Natural killer cell (primary cell): ENCODE measurements at regions of chr3 and their contacts with region 1.

Region 1: DNA sequence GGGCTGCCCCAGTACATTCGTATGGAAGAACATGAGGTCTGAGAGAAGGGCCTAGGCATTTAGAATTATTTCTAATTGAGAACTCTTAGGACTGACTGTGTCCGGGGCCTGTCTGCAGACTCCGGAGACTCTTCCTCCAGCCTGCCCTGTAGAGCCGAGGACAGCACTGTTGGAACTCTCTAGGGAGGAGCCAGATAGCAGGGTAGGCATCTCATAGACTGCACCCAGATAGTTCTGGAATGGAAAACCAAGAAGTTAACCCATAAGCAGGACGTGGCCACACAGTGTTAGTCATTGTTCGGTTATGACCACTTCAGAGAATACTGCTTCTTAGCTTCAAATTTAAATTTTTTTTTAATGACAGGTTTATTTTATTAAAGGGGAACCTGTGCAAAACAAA is 59.5 kb downstream of the SNRK start:
- DNase-seq: no peak
- ATAC-seq: peak in 2 of 3 donors; percentile 31 to 34
- H3K4me3 ChIP-seq: no peak overlapping the region
- H3K4me3 Mint-ChIP-seq: peak overlapping the region; percentile 79
- H3K27ac ChIP-seq: peak overlapping the region; percentile 85
- H3K27ac Mint-ChIP-seq: peak overlapping the region; percentile 97 to 98
- H3K4me1 ChIP-seq: peaks cover 61% of the 10 kb centered on the region
- H3K4me1 Mint-ChIP-seq: peaks cover 79 to 83% of the 10 kb centered on the region in 2 donors
- H3K27me3 ChIP-seq: no peaks in the 10 kb centered on the region
- H3K27me3 Mint-ChIP-seq: no peaks in the 10 kb centered on the region
- CTCF ChIP-seq: no peak

Region 2: DNA sequence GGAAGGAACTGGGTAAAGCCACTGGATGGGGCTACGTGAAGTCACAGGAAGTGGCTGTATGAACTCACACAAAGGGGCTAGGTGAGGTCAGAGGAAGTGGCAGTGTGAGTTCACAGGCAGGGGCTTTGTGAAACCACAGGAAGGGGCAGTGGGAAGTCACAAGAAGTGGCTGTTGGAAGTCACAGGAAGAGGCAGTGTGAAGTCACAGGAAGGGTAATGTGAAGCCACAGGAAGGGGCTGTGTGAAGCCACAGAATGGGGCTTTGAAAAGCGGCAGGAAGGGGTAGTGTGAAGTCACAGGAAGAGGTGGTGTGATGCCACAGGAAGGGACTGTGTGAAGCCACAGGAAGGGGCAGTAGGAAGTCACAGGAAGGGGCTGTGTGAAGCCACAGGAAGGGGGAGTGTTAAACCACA is 332.1 kb before region 1 on chr3:
- intact Hi-C with region 1: loop called (anchors 1 kb)
- DNase-seq: peak; percentile 52 to 66
- ATAC-seq: peak in 2 of 3 donors; percentile 6 to 12
- H3K4me3 ChIP-seq: no peak overlapping the region
- H3K4me3 Mint-ChIP-seq: no peak overlapping the region
- H3K27ac ChIP-seq: peak overlapping the region; percentile 97
- H3K27ac Mint-ChIP-seq: no peak overlapping the region
- H3K4me1 ChIP-seq: peaks cover 37% of the 10 kb centered on the region
- H3K4me1 Mint-ChIP-seq: no peaks in the 10 kb centered on the region
- H3K27me3 ChIP-seq: no peaks in the 10 kb centered on the region
- H3K27me3 Mint-ChIP-seq: no peaks in the 10 kb centered on the region
- CTCF ChIP-seq: no peak

Region 3: GRCh38 chr3:43296565-43296964 is 49.3 kb before region 1 on chr3:
- intact Hi-C with region 1: loop called (anchors 2 kb)
- DNase-seq: peak; percentile 43 to 89
- ATAC-seq: peak; percentile 87 to 96 (median 91)
- H3K4me3 ChIP-seq: peak overlapping the region; percentile 14
- H3K4me3 Mint-ChIP-seq: peak overlapping the region; percentile 87
- H3K27ac ChIP-seq: peak overlapping the region; percentile 71
- H3K27ac Mint-ChIP-seq: peak overlapping the region; percentile 82 to 97
- H3K4me1 ChIP-seq: peaks cover 46% of the 10 kb centered on the region
- H3K4me1 Mint-ChIP-seq: peaks cover 71 to 81% of the 10 kb centered on the region in 2 donors
- H3K27me3 ChIP-seq: no peaks in the 10 kb centered on the region
- H3K27me3 Mint-ChIP-seq: no peaks in the 10 kb centered on the region
- CTCF ChIP-seq: no peak

Region 4: DNA sequence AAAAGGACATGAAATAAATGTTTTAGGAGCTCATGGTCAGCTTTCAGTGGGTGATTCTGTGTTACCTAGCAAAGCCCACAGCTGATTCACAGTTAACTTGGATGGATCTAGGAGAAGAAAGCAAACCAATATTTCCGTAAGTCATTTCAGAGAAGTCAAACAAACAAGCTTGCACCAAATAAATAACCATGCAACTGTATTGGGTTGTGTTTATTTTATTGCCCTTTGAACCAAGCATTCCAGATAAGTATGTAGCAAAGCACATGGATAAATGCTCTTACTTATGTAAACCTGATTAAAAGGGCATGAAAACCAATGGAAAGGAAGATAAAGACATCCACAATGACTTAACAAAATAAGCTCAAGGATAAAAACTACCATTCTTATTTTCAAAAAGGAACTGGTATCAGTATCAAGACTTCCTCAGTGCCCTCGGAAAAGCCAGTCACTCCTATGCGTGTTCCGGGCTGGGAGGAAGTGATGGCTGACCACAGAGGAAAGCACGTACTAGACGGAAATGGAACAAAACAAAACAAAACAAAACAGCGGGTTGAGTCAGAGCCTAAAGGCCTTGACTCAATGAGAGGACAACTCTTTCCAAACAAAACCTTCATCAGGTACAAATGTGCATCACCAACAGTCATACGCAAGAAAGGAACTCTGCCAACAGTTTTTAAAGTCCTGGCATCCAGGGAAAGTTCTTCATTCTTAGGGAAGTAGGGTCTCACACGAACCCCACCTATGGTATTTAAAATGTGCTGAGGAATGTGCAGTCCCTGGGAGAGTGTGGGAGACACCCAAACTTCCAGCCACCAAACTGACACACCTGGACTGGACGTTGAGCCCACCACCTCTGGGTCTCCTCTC is 43.7 kb after region 1 on chr3:
- intact Hi-C with region 1: loop called (anchors 2 kb)
- DNase-seq: peak; percentile 45 to 90
- ATAC-seq: peak; percentile 83 to 91 (median 90)
- H3K4me3 ChIP-seq: no peak overlapping the region
- H3K4me3 Mint-ChIP-seq: peak overlapping the region; percentile 67
- H3K27ac ChIP-seq: peak overlapping the region; percentile 96
- H3K27ac Mint-ChIP-seq: peak overlapping the region; percentile 89 to 94
- H3K4me1 ChIP-seq: peaks cover 41% of the 10 kb centered on the region
- H3K4me1 Mint-ChIP-seq: peaks cover 80 to 82% of the 10 kb centered on the region in 2 donors
- H3K27me3 ChIP-seq: no peaks in the 10 kb centered on the region
- H3K27me3 Mint-ChIP-seq: no peaks in the 10 kb centered on the region
- CTCF ChIP-seq: no peak

Region 5: GRCh38 chr3:43477600-43477999 is 131.7 kb after region 1 on chr3:
- intact Hi-C with region 1: loop called (anchors 1 kb)
- DNase-seq: peak; percentile 69 to 89
- ATAC-seq: peak; percentile 90 to 98 (median 98)
- H3K4me3 ChIP-seq: no peak overlapping the region
- H3K4me3 Mint-ChIP-seq: peak overlapping the region; percentile 60
- H3K27ac ChIP-seq: peak overlapping the region; percentile 97
- H3K27ac Mint-ChIP-seq: peak overlapping the region; percentile 96 to 98
- H3K4me1 ChIP-seq: peaks cover 26% of the 10 kb centered on the region
- H3K4me1 Mint-ChIP-seq: peaks cover 63 to 65% of the 10 kb centered on the region in 2 donors
- H3K27me3 ChIP-seq: no peaks in the 10 kb centered on the region
- H3K27me3 Mint-ChIP-seq: no peaks in the 10 kb centered on the region
- CTCF ChIP-seq: no peak

Region 6: GRCh38 chr3:43503067-43503728 is 157.3 kb after region 1 on chr3:
- intact Hi-C with region 1: loop called (anchors 2 kb)
- DNase-seq: peak in 1 of 2 donors; percentile 70
- ATAC-seq: peak; percentile 60 to 81 (median 77)
- H3K4me3 ChIP-seq: no peak overlapping the region
- H3K4me3 Mint-ChIP-seq: peak overlapping the region; percentile 10
- H3K27ac ChIP-seq: no peak overlapping the region
- H3K27ac Mint-ChIP-seq: peak overlapping the region; percentile 62 to 67
- H3K4me1 ChIP-seq: peaks cover 13% of the 10 kb centered on the region
- H3K4me1 Mint-ChIP-seq: peaks cover 47 to 48% of the 10 kb centered on the region in 2 donors
- H3K27me3 ChIP-seq: no peaks in the 10 kb centered on the region
- H3K27me3 Mint-ChIP-seq: no peaks in the 10 kb centered on the region
- CTCF ChIP-seq: peak; percentile 85

Region 7: GRCh38 chr3:43597961-43598360 is 252.1 kb after region 1 on chr3:
- intact Hi-C with region 1: no loop called
- DNase-seq: no peak
- ATAC-seq: no peak
- H3K4me3 ChIP-seq: no peak overlapping the region
- H3K4me3 Mint-ChIP-seq: no peak overlapping the region
- H3K27ac ChIP-seq: no peak overlapping the region
- H3K27ac Mint-ChIP-seq: no peak overlapping the region
- H3K4me1 ChIP-seq: no peaks in the 10 kb centered on the region
- H3K4me1 Mint-ChIP-seq: no peaks in the 10 kb centered on the region
- H3K27me3 ChIP-seq: no peaks in the 10 kb centered on the region
- H3K27me3 Mint-ChIP-seq: no peaks in the 10 kb centered on the region
- CTCF ChIP-seq: no peak